ENCODE measurements at regions of chr2 and their contacts with region 1.

Region 1: GRCh38 chr2:169012812-169013627 is 18.1 kb downstream of the ABCB11 start:
- DNase-seq: no peak
- H3K4me3 ChIP-seq: no peak overlapping the region
- H3K27ac ChIP-seq: no peak overlapping the region
- H3K4me1 ChIP-seq: no peaks in the 10 kb centered on the region
- H3K27me3 ChIP-seq: no peaks in the 10 kb centered on the region
- CTCF ChIP-seq: no peak
- EP300 ChIP-seq: no peak
- POLR2A ChIP-seq: no peak

Region 2: GRCh38 chr2:168323529-168324021 is 689.4 kb before region 1 on chr2:
- intact Hi-C with region 1: no loop called
- DNase-seq: no peak
- H3K4me3 ChIP-seq: no peak overlapping the region
- H3K27ac ChIP-seq: no peak overlapping the region
- H3K4me1 ChIP-seq: no peaks in the 10 kb centered on the region
- H3K27me3 ChIP-seq: no peaks in the 10 kb centered on the region
- CTCF ChIP-seq: no peak
- EP300 ChIP-seq: no peak
- POLR2A ChIP-seq: no peak

Region 3: DNA sequence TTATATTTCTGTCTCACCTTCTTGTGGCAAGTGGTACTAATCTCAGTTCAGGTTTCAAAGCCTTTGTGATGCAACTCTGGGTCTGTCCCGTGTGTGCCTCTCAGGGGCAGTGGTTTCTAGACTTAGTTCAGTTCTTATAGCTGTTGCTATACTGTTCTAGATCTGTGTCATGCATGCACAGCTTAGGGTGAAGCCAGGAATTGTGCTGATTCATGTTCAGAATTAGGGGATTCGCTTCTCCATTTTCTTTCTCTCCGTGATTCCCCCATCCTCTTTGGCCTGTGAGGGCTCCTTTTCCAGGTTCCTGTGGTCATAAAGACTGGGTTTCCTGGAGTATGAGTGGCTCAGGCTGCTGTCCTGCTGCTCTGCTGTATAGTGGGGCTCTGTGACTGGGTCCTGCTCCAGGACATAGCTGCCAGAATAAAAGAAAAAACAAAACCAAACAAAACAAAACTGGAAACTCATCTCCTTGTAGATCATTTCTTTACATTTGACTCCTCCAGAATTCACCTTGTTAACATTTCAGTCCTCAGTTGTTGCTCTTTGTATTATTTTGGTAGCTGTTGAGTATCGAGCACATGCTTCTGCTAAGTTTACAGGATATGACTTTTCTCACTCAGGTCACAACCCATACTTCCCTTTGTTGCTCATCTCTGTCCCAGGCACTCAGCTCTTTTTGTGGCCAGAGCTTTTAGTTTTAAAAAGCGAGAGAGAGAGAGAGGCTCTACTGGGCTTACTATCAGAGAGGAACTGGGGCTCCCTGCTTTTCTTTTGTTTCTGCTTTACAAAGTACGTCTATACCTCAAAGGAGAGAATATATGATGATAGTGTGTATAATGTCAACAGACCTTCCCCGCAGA is 522.8 kb before region 1 on chr2:
- intact Hi-C with region 1: loop called in 1 of 4 experiments (anchors 5 kb)
- DNase-seq: no peak
- H3K4me3 ChIP-seq: no peak overlapping the region
- H3K27ac ChIP-seq: no peak overlapping the region
- H3K4me1 ChIP-seq: peaks cover 4% of the 10 kb centered on the region
- H3K27me3 ChIP-seq: no peaks in the 10 kb centered on the region
- CTCF ChIP-seq: no peak
- EP300 ChIP-seq: no peak
- POLR2A ChIP-seq: no peak

Measured in ovary (tissue), 10 donors.